ENCODE measurements at regions of chr6 and their contacts with region 1.

Region 1: GRCh38 chr6:107957909-107958688 is at the start of gene SEC63:
- DNase-seq: peak; percentile 97
- H3K4me3 ChIP-seq: peak within 1 kb of the TSS; percentile 67
- H3K4me3 Mint-ChIP-seq: peak within 1 kb of the TSS; percentile 92
- H3K27ac Mint-ChIP-seq: peak within 1 kb of the TSS; percentile 93
- H3K4me1 ChIP-seq: 0 out of 2 replicates have a peak, but pooled peaks cover 4% of the 10 kb centered on the region
- H3K4me1 Mint-ChIP-seq: peaks cover 7% of the 10 kb centered on the region
- H3K27me3 ChIP-seq: no peaks in the 10 kb centered on the region
- H3K27me3 Mint-ChIP-seq: no peaks in the 10 kb centered on the region
- CTCF ChIP-seq: no peak
- total RNA-seq, gene SEC63: 119 and 124 TPM in 2 replicates

Region 2: GRCh38 chr6:107877968-107878367 is 80.1 kb before region 1 on chr6:
- CTCF ChIA-PET with region 1: no interaction called
- POLR2A ChIA-PET with region 1: no interaction called
- intact Hi-C with region 1: no loop called
- DNase-seq: no peak
- H3K4me3 ChIP-seq: no peak overlapping the region
- H3K4me3 Mint-ChIP-seq: no peak overlapping the region
- H3K27ac Mint-ChIP-seq: no peak overlapping the region
- H3K4me1 ChIP-seq: no peaks in the 10 kb centered on the region
- H3K4me1 Mint-ChIP-seq: no peaks in the 10 kb centered on the region
- H3K27me3 ChIP-seq: no peaks in the 10 kb centered on the region
- H3K27me3 Mint-ChIP-seq: no peaks in the 10 kb centered on the region
- CTCF ChIP-seq: no peak

Region 3: GRCh38 chr6:108294727-108295625 is 336.9 kb after region 1 on chr6 and contains the start of gene AFG1L:
- CTCF ChIA-PET with region 1: no interaction called
- POLR2A ChIA-PET with region 1: interaction called, 13 read pairs
- intact Hi-C with region 1: no loop called
- DNase-seq: peak; percentile 93 to 95
- H3K4me3 ChIP-seq: peak within 1 kb of the TSS; percentile 73
- H3K4me3 Mint-ChIP-seq: peak within 1 kb of the TSS; percentile 99
- H3K27ac Mint-ChIP-seq: peak within 1 kb of the TSS; percentile 99
- H3K4me1 ChIP-seq: no peaks in the 10 kb centered on the region; the same call in 1 of the 2 replicates
- H3K4me1 Mint-ChIP-seq: no peaks in the 10 kb centered on the region
- H3K27me3 ChIP-seq: no peaks in the 10 kb centered on the region
- H3K27me3 Mint-ChIP-seq: no peaks in the 10 kb centered on the region
- CTCF ChIP-seq: no peak
- total RNA-seq, gene AFG1L: 7.2 and 10.2 TPM in 2 replicates